ENCODE measurements at regions of chr2 and their contacts with region 1.

Region 1: DNA sequence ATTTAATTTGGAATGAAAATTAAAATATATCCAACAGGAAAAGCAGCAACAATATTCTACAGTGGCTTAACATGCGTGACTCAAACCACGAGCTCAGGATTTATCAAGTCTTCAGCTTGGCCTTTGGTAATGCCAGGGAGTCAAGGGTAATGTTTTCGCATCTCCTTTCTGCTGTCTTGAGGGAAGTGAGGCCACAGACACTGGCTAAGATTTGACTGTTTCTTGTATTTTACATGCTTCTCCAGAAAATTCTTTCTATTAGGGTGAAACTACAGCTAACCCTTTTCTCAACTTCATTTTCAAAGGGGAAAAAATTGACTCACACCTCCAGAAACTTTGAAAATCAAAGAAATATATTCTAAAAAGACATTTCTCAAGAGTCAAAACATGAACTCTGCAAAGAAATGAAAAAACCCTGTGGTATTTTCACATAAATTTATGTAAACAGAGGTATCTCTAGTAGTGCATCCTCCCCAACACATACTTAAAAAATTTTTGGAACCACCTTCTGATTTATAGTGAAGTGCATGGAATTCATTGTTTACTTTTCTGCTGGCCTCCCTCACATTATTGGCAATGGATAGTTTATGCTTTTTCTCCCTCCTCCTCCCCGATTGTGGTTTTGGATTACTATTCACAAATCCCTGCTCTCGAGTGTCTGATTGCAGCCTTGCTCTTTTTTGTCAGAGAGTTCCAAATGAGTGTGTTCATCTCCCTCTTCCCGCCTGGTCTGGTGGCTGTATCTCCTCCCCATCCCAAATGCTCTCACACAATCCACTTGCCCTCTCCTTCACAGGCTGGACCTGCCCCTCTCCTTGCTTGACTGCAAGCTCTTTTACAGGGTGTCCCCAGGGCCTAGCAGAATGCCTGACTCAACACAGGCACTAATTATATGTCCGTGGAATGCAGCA is 48.6 kb downstream of the DPP4 start:
- DNase-seq: no peak
- ATAC-seq: no peak
- H3K4me3 Mint-ChIP-seq: no peak overlapping the region
- H3K27ac Mint-ChIP-seq: peak overlapping the region; percentile 18
- H3K4me1 Mint-ChIP-seq: peaks cover 57% of the 10 kb centered on the region
- H3K27me3 Mint-ChIP-seq: no peaks in the 10 kb centered on the region

Region 2: DNA sequence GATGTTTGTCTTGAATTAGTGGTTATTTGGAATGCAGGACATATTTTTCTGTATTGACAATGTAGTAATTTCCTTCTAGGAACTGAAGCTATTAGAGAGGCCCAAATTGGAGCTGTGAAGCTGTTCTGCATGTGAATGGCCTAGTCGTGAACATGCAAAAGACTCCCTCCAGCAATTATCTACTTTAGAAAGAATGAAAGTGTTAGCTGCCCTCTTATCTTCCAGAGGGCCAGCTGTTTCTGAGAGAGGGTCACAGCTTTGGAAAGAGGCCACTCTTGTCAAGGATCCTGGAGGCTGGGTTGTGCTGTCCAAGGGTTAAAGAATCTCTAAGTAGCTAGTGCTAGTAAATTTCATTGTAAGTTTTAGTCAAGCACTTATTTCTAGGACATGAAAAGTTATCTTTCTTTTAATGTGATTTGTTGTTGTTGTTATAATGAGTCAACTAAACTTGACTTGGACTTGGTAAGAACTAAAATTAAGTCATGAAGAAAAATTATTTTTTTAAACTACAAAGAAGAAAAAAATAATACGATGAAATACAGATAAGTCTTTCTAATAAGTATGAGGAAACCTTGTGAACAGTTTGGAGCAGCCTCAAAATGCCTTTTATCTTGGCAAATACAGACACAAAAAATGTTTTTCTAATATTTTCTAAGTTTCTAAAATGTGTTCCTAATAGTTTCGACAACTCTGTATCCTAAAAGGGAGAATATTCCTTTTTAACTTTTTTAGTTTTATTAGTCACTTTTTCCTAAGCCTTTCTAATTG is 11.8 kb after region 1 on chr2:
- CTCF ChIA-PET with region 1: interaction called, 11 read pairs
- POLR2A ChIA-PET with region 1: interaction called, 4 read pairs
- DNase-seq: no peak
- ATAC-seq: no peak
- H3K4me3 Mint-ChIP-seq: no peak overlapping the region
- H3K27ac Mint-ChIP-seq: peak overlapping the region; percentile 46
- H3K4me1 Mint-ChIP-seq: peaks cover 15% of the 10 kb centered on the region
- H3K27me3 Mint-ChIP-seq: no peaks in the 10 kb centered on the region

Measured in activated CD8-positive, alpha-beta T cell treated with anti-CD3 and anti-CD28 coated beads, Interleukin-2, amount 10 ng/mL, durations not matched to agents 7 days and 5 days (primary cell).